GM12878 (cell line): ENCODE measurements at regions of chr3 and their contacts with region 1.

Region 1: DNA sequence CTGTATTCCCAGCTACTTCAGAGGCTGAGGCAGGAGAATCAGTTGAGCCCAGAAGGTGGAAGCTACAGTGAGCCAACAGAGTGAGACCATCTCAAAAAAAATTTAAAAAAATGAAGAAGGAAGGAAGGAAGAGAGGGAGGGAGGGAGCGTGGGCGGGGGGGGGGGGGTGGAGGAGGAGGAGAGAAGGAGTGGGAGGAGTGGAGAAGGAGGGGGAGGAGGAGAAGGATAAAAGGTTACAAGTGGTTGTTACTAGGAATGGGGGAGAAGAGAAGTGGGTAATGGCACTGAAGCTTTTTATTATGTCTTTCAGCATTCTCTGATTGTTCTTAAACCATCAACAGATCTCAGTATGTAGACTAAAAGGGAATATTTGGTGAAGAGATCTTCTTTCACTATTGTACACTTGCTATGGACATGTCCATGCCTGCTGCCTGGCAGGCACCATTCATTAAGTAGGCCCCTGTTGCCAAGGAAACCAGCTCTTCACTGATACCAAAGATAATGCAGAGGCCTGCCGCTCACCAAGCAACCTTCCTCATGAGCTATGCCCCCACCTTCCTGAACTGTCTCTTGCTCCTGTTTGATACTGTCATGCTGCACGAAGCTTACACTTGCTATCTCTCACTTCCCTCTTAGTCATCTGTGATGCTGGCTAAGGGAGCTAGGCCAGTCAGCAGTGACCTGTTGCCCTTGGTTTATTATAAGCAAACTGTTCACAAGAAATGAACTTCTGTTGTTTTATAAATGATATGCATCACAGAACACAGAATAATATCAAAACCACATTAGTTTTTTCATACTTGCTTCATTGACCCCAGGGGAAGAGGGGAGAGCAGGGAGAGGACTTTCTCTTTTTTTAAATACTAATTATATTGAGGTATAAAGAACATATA is 23.1 kb downstream of the EPM2AIP1 start:
- DNase-seq: peak; percentile 80
- ATAC-seq: peak; percentile 100
- H3K4me3 ChIP-seq: no peak overlapping the region
- H3K27ac ChIP-seq: peak overlapping the region; percentile 38
- H3K4me1 ChIP-seq: peaks cover 9% of the 10 kb centered on the region
- H3K27me3 ChIP-seq: no peaks in the 10 kb centered on the region
- CTCF ChIP-seq: no peak
- EP300 ChIP-seq: peak in 1 of 2 experiments; percentile 45; a peak in 1 of 4 replicates
- POLR2A ChIP-seq: no peak
- RAD21 ChIP-seq: no peak

Region 2: GRCh38 chr3:36988356-36988755 is 18.6 kb after region 1 on chr3:
- CTCF ChIA-PET with region 1: interaction called, 5 read pairs
- POLR2A ChIA-PET with region 1: interaction called, 17 read pairs
- RAD21 ChIA-PET with region 1: interaction called, 16 read pairs
- SMC1A ChIA-PET with region 1: interaction called, 46 read pairs
- in situ Hi-C with region 1: no loop called
- intact Hi-C with region 1: no loop called
- DNase-seq: no peak
- ATAC-seq: no peak
- H3K4me3 ChIP-seq: peak overlapping the region; percentile 45; the same call in 1 of the 2 replicates
- H3K27ac ChIP-seq: peak overlapping the region; percentile 15; the same call in 1 of the 2 replicates
- H3K4me1 ChIP-seq: no peaks in the 10 kb centered on the region
- H3K27me3 ChIP-seq: no peaks in the 10 kb centered on the region
- CTCF ChIP-seq: no peak
- EP300 ChIP-seq: no peak
- POLR2A ChIP-seq: no peak
- RAD21 ChIP-seq: no peak

Region 3: GRCh38 chr3:36993326-36994283 is 23.8 kb after region 1 on chr3 and contains the start of gene MLH1:
- CTCF ChIA-PET with region 1: interaction called, 5 read pairs
- POLR2A ChIA-PET with region 1: interaction called, 17 read pairs
- RAD21 ChIA-PET with region 1: interaction called, 16 read pairs
- SMC1A ChIA-PET with region 1: interaction called, 46 read pairs
- in situ Hi-C with region 1: no loop called
- intact Hi-C with region 1: no loop called
- DNase-seq: peak; percentile 100
- ATAC-seq: peak; percentile 88
- H3K4me3 ChIP-seq: peak within 1 kb of the TSS; percentile 97
- H3K27ac ChIP-seq: peak within 1 kb of the TSS; percentile 92
- H3K4me1 ChIP-seq: no peaks in the 10 kb centered on the region
- H3K27me3 ChIP-seq: no peaks in the 10 kb centered on the region
- CTCF ChIP-seq: no peak
- EP300 ChIP-seq: no peak
- POLR2A ChIP-seq: peak; percentile 85
- RAD21 ChIP-seq: no peak
- polyA plus RNA-seq, gene MLH1: 58.6 to 67.3 TPM

Region 4: GRCh38 chr3:37041546-37042195 is 71.9 kb after region 1 on chr3:
- CTCF ChIA-PET with region 1: no interaction called
- POLR2A ChIA-PET with region 1: no interaction called
- RAD21 ChIA-PET with region 1: no interaction called
- SMC1A ChIA-PET with region 1: no interaction called
- in situ Hi-C with region 1: no loop called
- intact Hi-C with region 1: no loop called
- DNase-seq: no peak
- ATAC-seq: no peak
- H3K4me3 ChIP-seq: no peak overlapping the region
- H3K27ac ChIP-seq: no peak overlapping the region
- H3K4me1 ChIP-seq: no peaks in the 10 kb centered on the region
- H3K27me3 ChIP-seq: no peaks in the 10 kb centered on the region
- CTCF ChIP-seq: no peak
- EP300 ChIP-seq: no peak
- POLR2A ChIP-seq: no peak
- RAD21 ChIP-seq: no peak